GM13976 (cell line): ENCODE measurements at regions of chr13 and their contacts with region 1.

Region 1: GRCh38 chr13:99176309-99177276 is 24.1 kb upstream of the UBAC2 start:
- DNase-seq: peak; percentile 87
- CTCF ChIP-seq: peak; percentile 84

Region 2: DNA sequence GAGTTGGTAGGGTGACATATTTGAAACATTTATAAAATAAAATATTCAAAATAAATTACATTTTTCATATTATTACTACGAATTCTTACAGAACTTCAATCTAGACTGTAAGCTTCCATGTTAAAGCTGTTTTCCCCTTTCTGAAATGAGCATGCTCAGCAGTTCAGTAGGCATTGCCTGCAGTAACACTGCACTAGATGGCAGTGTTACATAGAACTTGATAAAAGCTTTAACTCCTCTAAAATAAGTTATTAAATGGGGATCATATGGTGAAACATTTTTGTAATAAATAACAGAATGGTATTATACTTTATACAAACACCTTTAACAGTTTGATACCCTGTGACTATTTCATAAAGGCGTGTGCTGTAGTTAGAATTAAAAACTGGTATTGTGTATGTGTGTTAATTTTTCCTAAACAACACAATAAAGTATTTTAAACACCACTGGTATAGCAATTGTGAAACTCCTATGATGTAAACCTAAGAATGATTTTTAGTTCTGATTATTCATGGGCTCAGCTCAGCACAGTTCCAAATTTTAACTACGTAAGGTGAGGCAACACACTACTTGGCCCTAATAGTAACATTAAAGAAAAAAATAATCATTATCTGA is 93.1 kb after region 1 on chr13:
- in situ Hi-C with region 1: loop called (anchors 10 kb)
- DNase-seq: peak; percentile 26
- CTCF ChIP-seq: peak; percentile 75

Region 3: DNA sequence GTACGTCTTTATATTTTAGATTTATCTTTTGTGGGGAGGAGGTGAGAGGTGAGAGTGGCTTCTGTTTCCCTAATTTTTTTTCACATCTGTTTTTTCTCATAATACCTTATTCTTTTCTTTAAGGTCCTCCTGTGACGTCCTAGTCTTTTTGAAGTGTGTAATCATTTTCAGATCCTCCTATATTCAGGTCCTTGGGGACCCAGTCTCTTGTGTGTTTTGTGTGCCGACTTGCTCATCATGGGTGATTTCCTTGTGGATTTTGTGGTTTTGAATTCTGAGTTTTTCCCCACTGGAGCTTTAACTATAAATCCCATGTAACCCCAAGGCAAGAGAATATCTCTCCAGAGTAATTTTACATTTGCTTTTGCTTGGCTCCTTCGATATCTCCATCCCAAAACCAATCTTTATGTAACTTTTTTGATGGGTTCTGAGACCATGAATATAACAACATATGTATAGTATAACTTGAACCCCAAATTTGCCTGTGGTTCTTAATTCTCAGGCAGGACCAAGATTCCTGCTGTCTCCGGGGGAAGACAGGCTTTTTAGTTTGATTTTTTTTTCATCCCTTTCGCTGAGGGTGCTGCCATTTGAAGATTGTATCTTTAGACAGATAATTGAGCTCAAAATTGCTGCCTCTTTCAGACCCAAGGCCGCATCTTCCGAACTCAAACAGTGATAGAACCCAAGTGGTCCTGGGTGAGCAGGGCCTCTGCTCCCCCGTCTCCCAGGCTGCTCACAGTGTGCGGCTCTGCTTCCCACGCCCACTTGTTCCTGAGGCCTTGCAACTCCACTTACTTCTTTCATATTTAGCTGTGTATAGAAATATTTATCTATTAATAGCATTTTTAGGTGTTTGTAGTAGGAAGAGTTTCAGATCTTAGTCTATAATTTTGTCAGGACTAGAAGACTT is 189.7 kb after region 1 on chr13:
- in situ Hi-C with region 1: no loop called
- DNase-seq: peak; percentile 71
- CTCF ChIP-seq: no peak